ENCODE measurements at regions of chr6 and their contacts with region 1.

Region 1: GRCh38 chr6:111483736-111484632 is 966 bp upstream of the REV3L start:
- DNase-seq: peak in 3 of 5 donors; percentile 89
- H3K4me3 ChIP-seq: peak overlapping the region; percentile 74
- H3K4me3 Mint-ChIP-seq: peak overlapping the region; percentile 91 to 99 (median 98)
- H3K27ac ChIP-seq: peak overlapping the region; percentile 80
- H3K27ac Mint-ChIP-seq: peak overlapping the region; percentile 97 to 100 (median 98)
- H3K4me1 ChIP-seq: peaks cover 57% of the 10 kb centered on the region
- H3K4me1 Mint-ChIP-seq: peaks cover 33 to 58% (median 45%) of the 10 kb centered on the region in 4 donors
- H3K27me3 ChIP-seq: no peaks in the 10 kb centered on the region
- H3K27me3 Mint-ChIP-seq: peaks cover 0 to 2% of the 10 kb centered on the region in 2 donors

Region 2: GRCh38 chr6:109690737-109691621 is 1793.0 kb before region 1 on chr6 and contains the starts of genes AK9 and FIG4:
- CTCF ChIA-PET with region 1: no interaction called
- POLR2A ChIA-PET with region 1: no interaction called
- intact Hi-C with region 1: loop called (anchors 2 kb)
- DNase-seq: peak; percentile 82 to 90 (median 84)
- H3K4me3 ChIP-seq: peak within 1 kb of the TSS; percentile 87 to 89
- H3K4me3 Mint-ChIP-seq: peak within 1 kb of the TSS; percentile 95 to 100 (median 99)
- H3K27ac ChIP-seq: peak within 1 kb of the TSS; percentile 74
- H3K27ac Mint-ChIP-seq: peak within 1 kb of the TSS; percentile 93 to 99 (median 97)
- H3K4me1 ChIP-seq: peaks cover 26% of the 10 kb centered on the region
- H3K4me1 Mint-ChIP-seq: peaks cover 10 to 29% (median 22%) of the 10 kb centered on the region in 4 donors
- H3K27me3 ChIP-seq: no peaks in the 10 kb centered on the region
- H3K27me3 Mint-ChIP-seq: peaks cover 0 to 2% of the 10 kb centered on the region in 2 donors
- total RNA-seq, gene AK9: 15.6 to 18.4 TPM
- total RNA-seq, gene FIG4: 14.4 to 14.8 TPM

Region 3: DNA sequence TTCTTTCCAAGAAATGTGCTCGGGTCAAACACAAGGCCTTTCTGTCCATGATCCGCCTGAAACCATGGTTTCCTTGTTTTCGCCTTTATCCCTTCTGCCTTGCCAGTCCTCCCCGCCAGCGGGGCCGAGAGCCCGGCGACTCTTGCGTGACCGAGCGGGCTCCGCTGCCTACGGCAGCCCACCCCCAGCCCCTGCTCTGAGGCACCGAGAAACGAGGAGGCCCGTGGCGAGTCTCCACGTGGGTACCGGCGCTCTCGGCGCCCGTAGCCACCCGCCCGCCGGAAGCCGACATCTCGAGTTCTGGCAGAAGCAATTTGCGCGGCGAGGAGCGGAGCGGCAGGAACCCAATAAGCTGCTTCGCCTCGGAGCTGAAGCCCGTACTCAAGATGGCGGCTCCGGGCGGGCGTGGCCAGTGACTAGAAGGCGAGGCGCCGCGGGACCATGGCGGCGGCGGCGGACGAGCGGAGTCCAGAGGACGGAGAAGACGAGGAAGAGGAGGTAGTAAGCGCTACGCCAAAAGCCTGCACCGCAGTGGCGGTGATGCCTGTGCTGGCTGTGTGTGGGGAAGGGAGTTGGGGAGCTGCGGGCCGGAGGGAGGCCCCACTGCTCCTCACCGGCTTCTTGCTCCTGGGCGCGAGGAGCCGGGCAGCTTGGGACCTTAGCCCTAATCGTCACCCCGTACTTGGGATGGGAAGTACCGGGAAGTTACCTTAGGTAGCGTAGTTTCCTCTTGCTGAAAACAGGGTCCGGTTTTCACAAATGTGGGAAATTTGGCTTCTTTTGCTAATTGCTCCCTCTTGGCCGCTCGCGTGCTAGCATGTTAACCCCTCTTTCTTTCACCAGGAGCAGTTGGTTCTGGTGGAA is 525.4 kb before region 1 on chr6 and contains the start of gene GTF3C6:
- CTCF ChIA-PET with region 1: no interaction called
- POLR2A ChIA-PET with region 1: no interaction called
- intact Hi-C with region 1: loop called (anchors 10 kb)
- DNase-seq: peak; percentile 90 to 94 (median 92)
- H3K4me3 ChIP-seq: peak within 1 kb of the TSS; percentile 69 to 94
- H3K4me3 Mint-ChIP-seq: peak within 1 kb of the TSS; percentile 95 to 99 (median 98)
- H3K27ac ChIP-seq: peak within 1 kb of the TSS; percentile 82
- H3K27ac Mint-ChIP-seq: peak within 1 kb of the TSS; percentile 91 to 99 (median 98)
- H3K4me1 ChIP-seq: peaks cover 20% of the 10 kb centered on the region
- H3K4me1 Mint-ChIP-seq: peaks cover 11 to 26% (median 17%) of the 10 kb centered on the region in 4 donors
- H3K27me3 ChIP-seq: no peaks in the 10 kb centered on the region
- H3K27me3 Mint-ChIP-seq: no peaks in the 10 kb centered on the region
- total RNA-seq, gene GTF3C6: 28.9 to 35.7 TPM

Region 4: GRCh38 chr6:111087106-111087835 is 396.7 kb before region 1 on chr6 and contains the start of gene SLC16A10:
- CTCF ChIA-PET with region 1: no interaction called
- POLR2A ChIA-PET with region 1: no interaction called
- intact Hi-C with region 1: loop called (anchors 5 kb)
- DNase-seq: peak; percentile 75 to 82 (median 79)
- H3K4me3 ChIP-seq: peak within 1 kb of the TSS; percentile 62 to 74
- H3K4me3 Mint-ChIP-seq: peak within 1 kb of the TSS; percentile 88 to 99 (median 93)
- H3K27ac ChIP-seq: peak within 1 kb of the TSS; percentile 47
- H3K27ac Mint-ChIP-seq: peak within 1 kb of the TSS; percentile 77 to 92 (median 90)
- H3K4me1 ChIP-seq: peaks cover 22% of the 10 kb centered on the region
- H3K4me1 Mint-ChIP-seq: peaks cover 21 to 37% (median 26%) of the 10 kb centered on the region in 4 donors
- H3K27me3 ChIP-seq: no peaks in the 10 kb centered on the region
- H3K27me3 Mint-ChIP-seq: peaks cover 7 to 15% of the 10 kb centered on the region in 2 donors
- total RNA-seq, gene SLC16A10: 9.8 to 11.2 TPM

Region 5: DNA sequence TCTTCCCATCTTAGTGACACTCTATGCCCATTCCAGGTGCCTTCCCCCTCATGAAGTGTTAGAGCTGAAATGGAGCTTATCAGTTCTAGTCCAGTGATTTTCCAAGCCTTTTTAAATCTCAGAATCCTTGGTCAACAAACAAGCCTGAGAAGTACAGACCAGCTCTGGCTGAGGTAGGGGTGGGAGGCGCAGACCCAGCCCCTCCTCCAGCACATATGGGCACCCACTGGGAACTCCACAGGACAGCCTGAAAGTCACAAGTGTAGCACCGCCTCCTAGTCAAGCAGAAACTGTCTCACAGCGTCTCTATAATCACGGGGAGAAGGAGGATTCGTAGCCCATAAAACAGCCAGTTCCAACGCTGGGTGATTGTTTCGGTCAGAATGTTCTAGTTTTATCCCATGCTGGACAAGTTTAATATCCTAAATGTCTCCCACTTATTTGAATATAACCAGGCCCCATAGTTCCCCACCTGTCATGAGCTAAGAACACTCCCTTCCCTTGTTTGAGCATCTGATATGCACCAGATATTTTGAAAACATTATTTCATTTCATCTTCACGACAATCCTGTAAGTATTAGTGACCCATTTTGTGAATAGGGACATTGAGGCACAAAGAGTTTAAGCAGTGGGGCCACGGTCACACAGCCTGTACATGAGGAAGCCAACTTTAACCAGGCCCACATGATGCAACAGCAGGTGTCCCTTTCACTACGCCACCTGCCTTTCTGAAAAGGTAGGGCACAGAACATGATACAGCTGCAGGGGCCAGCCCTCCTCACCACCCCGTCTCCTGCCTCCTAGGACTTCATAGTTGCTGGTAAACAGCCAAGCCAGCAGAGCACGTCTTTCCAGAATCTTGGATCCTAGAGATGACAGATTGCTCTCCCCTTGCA is 81.6 kb after region 1 on chr6:
- CTCF ChIA-PET with region 1: no interaction called
- POLR2A ChIA-PET with region 1: no interaction called
- intact Hi-C with region 1: loop called (anchors 2 kb)
- DNase-seq: peak in 2 of 5 donors; percentile 5 to 18
- H3K4me3 ChIP-seq: no peak overlapping the region
- H3K4me3 Mint-ChIP-seq: peak overlapping the region in 1 of 8 donors; percentile 14
- H3K27ac ChIP-seq: no peak overlapping the region
- H3K27ac Mint-ChIP-seq: peak overlapping the region in 6 of 7 donors; percentile 13 to 88 (median 60)
- H3K4me1 ChIP-seq: peaks cover 22% of the 10 kb centered on the region
- H3K4me1 Mint-ChIP-seq: peaks cover 31 to 49% (median 36%) of the 10 kb centered on the region in 4 donors
- H3K27me3 ChIP-seq: no peaks in the 10 kb centered on the region
- H3K27me3 Mint-ChIP-seq: no peaks in the 10 kb centered on the region

Region 6: DNA sequence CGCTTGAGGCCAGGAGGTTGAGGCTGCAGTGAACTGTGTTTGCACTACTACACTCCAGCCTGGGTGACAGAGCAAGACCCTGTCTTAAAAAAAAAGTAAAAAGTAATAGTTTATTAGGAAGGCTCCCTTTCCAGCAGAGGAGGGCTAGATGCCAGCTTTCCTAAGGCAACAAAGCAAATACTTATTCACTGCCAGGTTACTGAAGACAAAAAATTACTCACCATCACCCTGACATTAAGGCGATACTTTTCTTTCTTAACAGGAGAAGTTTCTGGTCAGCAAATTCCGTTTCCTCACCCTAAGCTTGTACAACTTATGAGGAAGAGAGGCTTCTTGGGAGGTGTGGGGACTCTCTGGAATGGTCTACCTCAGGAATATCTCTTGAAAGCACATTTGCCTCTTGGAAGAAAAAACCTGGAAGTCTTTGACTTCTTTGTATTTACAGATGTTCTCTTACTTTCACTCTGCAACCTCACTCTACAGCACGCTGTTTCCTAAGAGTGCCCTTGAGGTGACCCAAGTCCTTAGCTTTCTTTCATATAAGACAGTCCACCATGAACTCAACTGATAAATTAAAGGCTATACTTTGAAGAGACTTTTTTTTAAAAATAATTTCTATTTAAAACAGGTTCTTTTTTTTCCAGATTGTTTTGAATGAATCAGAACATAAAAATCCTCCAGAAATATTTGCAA is 174.6 kb after region 1 on chr6:
- CTCF ChIA-PET with region 1: no interaction called
- POLR2A ChIA-PET with region 1: no interaction called
- intact Hi-C with region 1: no loop called
- DNase-seq: no peak
- H3K4me3 ChIP-seq: no peak overlapping the region
- H3K4me3 Mint-ChIP-seq: no peak overlapping the region
- H3K27ac ChIP-seq: no peak overlapping the region
- H3K27ac Mint-ChIP-seq: peak overlapping the region in 1 of 7 donors; percentile 43
- H3K4me1 ChIP-seq: no peaks in the 10 kb centered on the region
- H3K4me1 Mint-ChIP-seq: peaks cover 0 to 3% (median under 1%) of the 10 kb centered on the region in 4 donors
- H3K27me3 ChIP-seq: no peaks in the 10 kb centered on the region
- H3K27me3 Mint-ChIP-seq: no peaks in the 10 kb centered on the region

Region 7: GRCh38 chr6:112087136-112087911 is 603.3 kb after region 1 on chr6 and contains the starts of genes FAM229B and TUBE1:
- CTCF ChIA-PET with region 1: interaction called, 3 read pairs
- POLR2A ChIA-PET with region 1: interaction called, 8 read pairs
- intact Hi-C with region 1: loop called (anchors 5 kb)
- DNase-seq: peak; percentile 89 to 97 (median 93)
- H3K4me3 ChIP-seq: peak within 1 kb of the TSS; percentile 31 to 80
- H3K4me3 Mint-ChIP-seq: no peak within 1 kb of the TSS
- H3K27ac ChIP-seq: peak within 1 kb of the TSS; percentile 78
- H3K27ac Mint-ChIP-seq: peak within 1 kb of the TSS in 1 of 7 donors; percentile 59
- H3K4me1 ChIP-seq: peaks cover 15% of the 10 kb centered on the region
- H3K4me1 Mint-ChIP-seq: peaks cover 6 to 15% (median 8%) of the 10 kb centered on the region in 4 donors
- H3K27me3 ChIP-seq: peaks cover 15% of the 10 kb centered on the region
- H3K27me3 Mint-ChIP-seq: peaks cover 13 to 17% of the 10 kb centered on the region in 2 donors
- total RNA-seq, gene FAM229B: 1.7 to 1.9 TPM
- total RNA-seq, gene TUBE1: 40.6 to 45.2 TPM

Region 8: DNA sequence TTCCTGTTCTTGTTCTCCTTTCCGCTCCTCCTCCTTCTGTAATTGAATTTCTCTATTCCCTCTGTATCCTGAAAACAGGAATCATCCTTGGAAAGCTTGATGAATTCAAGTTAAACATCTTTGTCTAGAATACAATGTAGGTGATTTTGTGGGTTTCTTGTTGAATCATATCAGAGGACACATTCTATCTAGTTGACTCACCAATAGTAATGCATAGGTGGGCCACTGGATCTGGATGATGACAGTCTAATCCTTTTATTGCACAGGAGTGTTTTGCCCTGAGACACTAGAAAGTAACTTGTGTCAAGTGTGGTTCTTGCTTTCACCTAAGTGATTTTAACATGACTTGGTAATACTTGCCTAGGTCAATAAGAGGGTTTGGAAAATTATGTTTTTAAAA is 1027.5 kb after region 1 on chr6:
- CTCF ChIA-PET with region 1: no interaction called
- POLR2A ChIA-PET with region 1: no interaction called
- intact Hi-C with region 1: no loop called
- DNase-seq: no peak
- H3K4me3 ChIP-seq: no peak overlapping the region
- H3K4me3 Mint-ChIP-seq: no peak overlapping the region
- H3K27ac ChIP-seq: no peak overlapping the region
- H3K27ac Mint-ChIP-seq: no peak overlapping the region
- H3K4me1 ChIP-seq: no peaks in the 10 kb centered on the region
- H3K4me1 Mint-ChIP-seq: no peaks in the 10 kb centered on the region
- H3K27me3 ChIP-seq: no peaks in the 10 kb centered on the region
- H3K27me3 Mint-ChIP-seq: no peaks in the 10 kb centered on the region